ENCODE measurements at regions of chr22 and their contacts with region 1.

Region 1: GRCh38 chr22:33529424-33530113 is 390.7 kb downstream of the LARGE1 start:
- DNase-seq: no peak
- ATAC-seq: peak in 3 of 4 donors; percentile 70 to 87 (median 77)
- H3K4me3 ChIP-seq: no peak overlapping the region
- H3K27ac ChIP-seq: peak overlapping the region in 9 of 12 donors; percentile 5 to 67 (median 37)
- H3K4me1 ChIP-seq: peaks cover 4 to 39% (median 12%) of the 10 kb centered on the region in 12 donors
- H3K27me3 ChIP-seq: no peaks in the 10 kb centered on the region
- CTCF ChIP-seq: no peak
- POLR2A ChIP-seq: no peak

Region 2: DNA sequence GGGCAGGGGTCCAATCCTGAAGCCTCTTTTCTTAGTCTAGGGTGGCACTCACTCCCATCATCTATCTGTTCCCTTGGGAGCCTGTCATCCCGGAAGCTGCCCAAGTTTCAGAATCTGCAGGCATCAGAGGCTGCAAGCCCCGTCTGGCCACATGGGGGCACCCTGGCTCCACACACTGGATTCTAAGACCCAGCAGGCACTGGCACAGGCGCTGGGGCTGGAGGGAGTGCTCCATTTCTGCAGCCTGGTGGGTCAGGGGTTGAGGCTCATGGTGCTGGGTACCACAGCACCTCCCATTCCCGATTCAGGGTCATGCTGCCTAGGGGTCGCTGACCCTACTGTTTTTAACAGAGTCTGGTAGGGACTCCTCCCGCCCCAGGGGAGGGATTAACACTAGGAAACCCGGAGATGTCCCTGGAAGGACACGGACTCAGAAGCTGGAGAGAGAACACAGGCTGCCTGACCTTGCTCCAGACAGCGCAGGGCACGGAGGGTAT is 227.5 kb before region 1 on chr22:
- intact Hi-C with region 1: no loop called
- DNase-seq: peak; percentile 77 to 89 (median 83)
- ATAC-seq: peak; percentile 83 to 91 (median 88)
- H3K4me3 ChIP-seq: peak overlapping the region in 5 of 12 donors; percentile 3 to 25 (median 11)
- H3K27ac ChIP-seq: peak overlapping the region in 8 of 12 donors; percentile 4 to 75 (median 65)
- H3K4me1 ChIP-seq: peaks cover 0 to 33% (median 10%) of the 10 kb centered on the region in 12 donors
- H3K27me3 ChIP-seq: no peaks in the 10 kb centered on the region
- CTCF ChIP-seq: peak; percentile 87 to 98 (median 94)
- POLR2A ChIP-seq: no peak

Region 3: GRCh38 chr22:33563220-33563964 is 33.8 kb after region 1 on chr22:
- intact Hi-C with region 1: loop called in 3 of 10 experiments (anchors 1 to 5 kb)
- DNase-seq: no peak
- ATAC-seq: peak in 2 of 4 donors; percentile 14 to 57
- H3K4me3 ChIP-seq: peak overlapping the region in 6 of 12 donors; percentile 3 to 37 (median 22)
- H3K27ac ChIP-seq: peak overlapping the region in 10 of 12 donors; percentile 19 to 81 (median 64)
- H3K4me1 ChIP-seq: peaks cover 0 to 42% (median 26%) of the 10 kb centered on the region in 12 donors
- H3K27me3 ChIP-seq: no peaks in the 10 kb centered on the region
- CTCF ChIP-seq: no peak
- POLR2A ChIP-seq: no peak

Region 4: DNA sequence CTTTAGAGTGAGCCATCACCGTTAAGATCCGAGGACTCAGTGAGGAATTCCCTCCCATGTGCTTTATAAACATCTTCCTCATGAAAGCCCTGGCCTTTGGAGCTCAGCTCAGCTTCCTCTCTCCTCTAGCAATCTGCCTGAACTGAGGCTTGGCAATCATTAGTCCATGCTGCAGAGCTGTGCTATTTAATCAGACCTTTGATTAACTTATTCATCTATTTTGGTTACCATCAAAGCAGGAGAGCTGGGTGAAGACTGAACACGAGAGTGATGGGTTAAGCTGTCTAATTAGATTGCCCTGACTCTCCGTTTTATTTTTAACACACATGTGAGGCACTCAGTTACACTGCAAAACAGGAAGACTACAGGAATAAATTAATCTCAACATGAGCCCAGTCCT is 39.4 kb after region 1 on chr22:
- intact Hi-C with region 1: loop called in 2 of 10 experiments (anchors 2 to 5 kb)
- DNase-seq: no peak
- ATAC-seq: peak; percentile 8 to 62 (median 20)
- H3K4me3 ChIP-seq: no peak overlapping the region
- H3K27ac ChIP-seq: peak overlapping the region in 7 of 12 donors; percentile 21 to 63 (median 47)
- H3K4me1 ChIP-seq: peaks cover 0 to 49% (median 21%) of the 10 kb centered on the region in 12 donors
- H3K27me3 ChIP-seq: no peaks in the 10 kb centered on the region
- CTCF ChIP-seq: no peak
- POLR2A ChIP-seq: no peak

Region 5: GRCh38 chr22:33579448-33580093 is 50.0 kb after region 1 on chr22:
- intact Hi-C with region 1: loop called in 2 of 10 experiments (anchors 5 kb)
- DNase-seq: peak in 4 of 5 donors; percentile 65 to 70 (median 69)
- ATAC-seq: peak; percentile 88 to 92 (median 90)
- H3K4me3 ChIP-seq: no peak overlapping the region
- H3K27ac ChIP-seq: peak overlapping the region in 2 of 12 donors; percentile 13 to 37
- H3K4me1 ChIP-seq: peaks cover 0 to 34% (median 14%) of the 10 kb centered on the region in 12 donors
- H3K27me3 ChIP-seq: no peaks in the 10 kb centered on the region
- CTCF ChIP-seq: peak; percentile 77 to 98 (median 92)
- POLR2A ChIP-seq: no peak

Region 6: DNA sequence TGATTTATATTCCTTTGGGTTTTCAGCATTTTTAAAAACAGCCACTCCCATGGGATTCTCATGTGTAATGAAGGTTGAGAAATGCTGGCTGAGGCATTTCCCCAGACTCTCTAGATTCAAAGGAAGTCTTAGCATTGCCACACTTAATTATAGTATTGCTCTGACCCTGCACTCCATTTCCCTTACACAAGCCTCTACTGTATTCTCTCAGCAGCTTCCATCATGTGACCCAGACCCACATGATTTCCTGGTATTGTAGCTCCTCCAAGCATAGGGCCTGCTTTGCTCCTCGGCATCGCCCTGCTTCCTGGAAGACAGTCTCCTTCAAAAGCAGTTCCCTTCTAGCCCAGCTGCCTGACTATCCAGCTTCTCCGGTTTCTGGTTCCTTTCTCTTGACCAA is 129.2 kb after region 1 on chr22:
- intact Hi-C with region 1: loop called in 1 of 10 experiments (anchors 10 kb)
- DNase-seq: peak in 4 of 5 donors; percentile 66 to 75 (median 69)
- ATAC-seq: peak; percentile 49 to 91 (median 76)
- H3K4me3 ChIP-seq: no peak overlapping the region
- H3K27ac ChIP-seq: peak overlapping the region in 11 of 12 donors; percentile 16 to 74 (median 61)
- H3K4me1 ChIP-seq: peaks cover 0 to 40% (median 12%) of the 10 kb centered on the region in 12 donors
- H3K27me3 ChIP-seq: no peaks in the 10 kb centered on the region
- CTCF ChIP-seq: no peak
- POLR2A ChIP-seq: no peak

Region 7: DNA sequence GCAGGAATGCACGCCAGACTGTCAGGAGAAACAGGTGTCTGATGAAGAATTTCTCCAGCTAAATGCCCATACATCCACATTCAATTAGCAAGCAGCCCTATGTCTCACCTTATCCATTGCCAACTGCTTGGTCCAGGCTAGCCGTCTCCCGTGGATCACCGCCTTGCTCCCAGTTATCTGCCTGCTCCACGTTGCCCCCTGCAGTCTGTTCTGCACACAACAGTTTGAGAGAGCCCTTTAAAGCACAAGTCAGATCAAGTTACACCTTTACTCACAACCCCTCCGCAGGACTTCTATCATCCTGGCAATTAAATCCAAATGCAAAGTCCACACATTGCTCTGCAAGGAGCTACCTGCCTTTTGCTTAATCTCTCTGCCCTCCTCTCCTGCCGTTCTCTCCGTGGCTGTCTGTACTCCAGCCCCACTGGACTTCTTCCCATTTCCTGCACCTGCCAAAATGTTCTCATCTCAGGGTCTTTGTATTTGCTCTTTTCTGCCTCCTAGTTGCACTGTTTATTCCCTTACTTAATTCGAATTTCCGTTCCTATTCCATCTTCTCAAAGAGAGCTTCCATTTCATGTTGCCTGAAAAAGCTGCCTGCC is 576.0 kb after region 1 on chr22:
- intact Hi-C with region 1: loop called in 2 of 10 experiments (anchors 5 to 10 kb)
- DNase-seq: peak in 4 of 5 donors; percentile 31 to 62 (median 51)
- ATAC-seq: peak in 3 of 4 donors; percentile 72 to 82 (median 78)
- H3K4me3 ChIP-seq: no peak overlapping the region
- H3K27ac ChIP-seq: no peak overlapping the region
- H3K4me1 ChIP-seq: no peaks in the 10 kb centered on the region
- H3K27me3 ChIP-seq: peaks cover 0 to 11% (median 0%) of the 10 kb centered on the region in 9 donors
- CTCF ChIP-seq: peak; percentile 50 to 77 (median 68)
- POLR2A ChIP-seq: no peak

Measured in heart left ventricle (tissue), 16 donors.